ENCODE measurements at regions of chr9 and their contacts with region 1.

Region 1: DNA sequence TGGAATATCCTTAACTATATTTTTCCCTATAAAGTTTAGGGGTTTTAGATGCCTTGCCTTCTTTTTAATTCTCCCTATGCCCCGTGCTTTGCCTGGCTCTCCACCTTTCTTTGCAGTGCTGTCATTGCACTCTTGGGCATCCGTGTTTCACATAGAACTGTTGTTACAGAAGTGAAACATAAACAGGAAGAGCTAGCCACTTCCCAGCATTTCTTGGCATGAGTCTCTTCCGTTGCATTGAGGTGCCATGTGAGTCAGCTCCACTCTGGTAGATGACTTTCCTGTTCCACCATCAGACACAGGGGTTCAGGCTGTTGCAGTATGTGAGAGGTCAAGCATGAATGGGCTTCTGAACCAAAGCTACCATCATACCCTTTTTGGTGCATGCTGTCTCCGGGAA is 73.4 kb downstream of the ANGPTL2 start:
- DNase-seq: peak in 2 of 5 donors; percentile 45 to 52
- ATAC-seq: peak in 3 of 4 donors; percentile 68 to 86 (median 81)
- H3K4me3 ChIP-seq: peak overlapping the region in 2 of 12 donors; percentile 20 to 37
- H3K27ac ChIP-seq: peak overlapping the region in 9 of 12 donors; percentile 7 to 82 (median 41)
- H3K4me1 ChIP-seq: peaks cover 0 to 53% (median 31%) of the 10 kb centered on the region in 12 donors
- H3K27me3 ChIP-seq: no peaks in the 10 kb centered on the region
- CTCF ChIP-seq: peak in 9 of 12 donors; percentile 8 to 54 (median 33)
- POLR2A ChIP-seq: no peak

Region 2: DNA sequence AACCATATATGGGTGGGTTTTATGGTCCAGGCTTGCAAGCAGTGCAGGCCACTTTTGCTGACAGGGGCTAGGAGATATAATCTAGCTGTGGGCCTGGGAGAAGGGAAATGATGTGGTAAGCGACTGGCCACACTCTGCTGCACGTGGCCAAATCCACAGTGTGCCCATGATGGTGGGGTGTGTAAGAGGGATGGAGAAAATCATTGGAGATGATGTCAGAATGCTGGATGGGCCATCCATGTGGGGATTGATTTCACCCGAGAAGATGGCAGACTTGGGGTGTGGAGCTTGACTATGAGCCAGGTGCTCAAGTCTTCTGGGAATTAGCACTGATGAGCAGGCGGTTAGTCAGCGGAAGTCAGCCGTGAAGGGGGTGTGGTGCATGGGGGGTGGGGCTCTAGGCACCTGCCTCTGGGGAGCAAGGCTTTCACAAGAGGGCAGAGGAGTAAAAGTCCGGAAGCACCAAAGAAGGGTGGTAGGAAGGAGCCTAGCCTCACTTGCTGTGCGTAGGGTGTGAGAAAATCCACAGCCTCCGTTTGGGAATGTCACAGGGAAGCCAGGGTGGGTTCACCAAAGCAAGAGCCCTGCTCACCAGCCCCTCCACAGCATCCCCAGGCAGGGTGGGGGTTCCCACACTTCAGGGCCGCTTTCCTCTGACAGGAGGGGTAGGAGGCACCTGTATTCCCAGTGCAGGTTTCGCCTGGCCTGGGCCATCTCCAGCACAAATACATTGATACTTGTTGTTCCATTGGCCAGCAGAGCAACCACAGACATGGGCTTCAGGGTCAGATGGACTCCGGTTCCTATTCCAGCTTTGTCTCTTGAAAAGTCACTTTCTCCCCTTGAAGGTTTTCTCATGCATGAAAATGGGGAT is 117.8 kb after region 1 on chr9:
- intact Hi-C with region 1: loop called in 1 of 10 experiments (anchors 10 kb)
- DNase-seq: no peak
- ATAC-seq: no peak
- H3K4me3 ChIP-seq: no peak overlapping the region
- H3K27ac ChIP-seq: no peak overlapping the region
- H3K4me1 ChIP-seq: peaks cover 0 to 29% (median 16%) of the 10 kb centered on the region in 12 donors
- H3K27me3 ChIP-seq: no peaks in the 10 kb centered on the region
- CTCF ChIP-seq: no peak
- POLR2A ChIP-seq: no peak

Measured in heart left ventricle (tissue), 16 donors.